Panc1 (cell line): ENCODE measurements at regions of chr2 and their contacts with region 1.

Region 1: GRCh38 chr2:34899079-34899478 is 1300.0 kb upstream of the FAM98A start:
- DNase-seq: no peak
- ATAC-seq: no peak
- H3K4me3 ChIP-seq: no peak overlapping the region
- H3K27ac ChIP-seq: no peak overlapping the region
- H3K4me1 ChIP-seq: no peaks in the 10 kb centered on the region
- H3K27me3 ChIP-seq: no peaks in the 10 kb centered on the region
- CTCF ChIP-seq: no peak

Region 2: GRCh38 chr2:34215174-34215573 is 683.9 kb before region 1 on chr2:
- CTCF ChIA-PET with region 1: interaction called, 10 read pairs
- POLR2A ChIA-PET with region 1: no interaction called
- in situ Hi-C with region 1: no loop called
- intact Hi-C with region 1: no loop called
- DNase-seq: no peak
- ATAC-seq: no peak
- H3K4me3 ChIP-seq: no peak overlapping the region
- H3K27ac ChIP-seq: no peak overlapping the region
- H3K4me1 ChIP-seq: no peaks in the 10 kb centered on the region
- H3K27me3 ChIP-seq: no peaks in the 10 kb centered on the region
- CTCF ChIP-seq: no peak